ENCODE measurements at regions of chr2 and their contacts with region 1.

Region 1: GRCh38 chr2:173027181-173028128 is 48.2 kb upstream of the MAP3K20 start:
- DNase-seq: peak; percentile 83
- ATAC-seq: peak; percentile 91
- H3K4me3 ChIP-seq: no peak overlapping the region
- H3K27ac ChIP-seq: no peak overlapping the region
- H3K4me1 ChIP-seq: peaks cover 0 to 4% of the 10 kb centered on the region in 2 experiments; a peak in 2 of 4 replicates
- H3K27me3 ChIP-seq: no peaks in the 10 kb centered on the region
- CTCF ChIP-seq: peak; percentile 91 to 98 (median 94)
- POLR2A ChIP-seq: no peak
- RAD21 ChIP-seq: peak; percentile 97

Region 2: GRCh38 chr2:172545408-172546084 is 481.9 kb before region 1 on chr2:
- CTCF ChIA-PET with region 1: no interaction called
- POLR2A ChIA-PET with region 1: no interaction called
- RAD21 ChIA-PET with region 1: no interaction called
- intact Hi-C with region 1: no loop called
- DNase-seq: no peak
- ATAC-seq: no peak
- H3K4me3 ChIP-seq: no peak overlapping the region
- H3K27ac ChIP-seq: no peak overlapping the region
- H3K4me1 ChIP-seq: no peaks in the 10 kb centered on the region
- H3K27me3 ChIP-seq: no peaks in the 10 kb centered on the region
- CTCF ChIP-seq: no peak
- POLR2A ChIP-seq: no peak
- RAD21 ChIP-seq: no peak

Region 3: DNA sequence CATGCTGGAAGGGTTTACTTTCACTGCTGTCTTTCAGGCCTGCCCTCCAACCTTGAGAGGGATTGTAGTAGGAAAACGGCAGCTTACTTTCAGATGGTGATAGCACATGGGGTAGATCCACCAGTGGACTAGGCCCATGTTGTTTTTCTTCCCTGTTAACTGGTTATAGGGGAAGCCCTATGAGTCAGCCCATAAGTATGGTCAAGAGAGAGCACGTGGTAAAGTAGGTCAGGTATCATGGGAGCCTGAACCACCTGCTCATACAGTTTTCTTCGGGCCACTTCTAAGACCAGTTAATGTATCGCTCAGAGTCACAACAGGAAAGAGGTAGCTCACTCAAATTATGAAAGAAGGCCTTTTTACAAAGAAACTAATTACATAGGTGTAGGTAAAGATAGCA is 438.5 kb before region 1 on chr2:
- CTCF ChIA-PET with region 1: no interaction called
- POLR2A ChIA-PET with region 1: no interaction called
- RAD21 ChIA-PET with region 1: no interaction called
- intact Hi-C with region 1: no loop called
- DNase-seq: no peak
- ATAC-seq: no peak
- H3K4me3 ChIP-seq: no peak overlapping the region
- H3K27ac ChIP-seq: no peak overlapping the region
- H3K4me1 ChIP-seq: no peaks in the 10 kb centered on the region; a peak in 1 of 4 replicates
- H3K27me3 ChIP-seq: no peaks in the 10 kb centered on the region
- CTCF ChIP-seq: no peak
- POLR2A ChIP-seq: no peak
- RAD21 ChIP-seq: no peak

Region 4: DNA sequence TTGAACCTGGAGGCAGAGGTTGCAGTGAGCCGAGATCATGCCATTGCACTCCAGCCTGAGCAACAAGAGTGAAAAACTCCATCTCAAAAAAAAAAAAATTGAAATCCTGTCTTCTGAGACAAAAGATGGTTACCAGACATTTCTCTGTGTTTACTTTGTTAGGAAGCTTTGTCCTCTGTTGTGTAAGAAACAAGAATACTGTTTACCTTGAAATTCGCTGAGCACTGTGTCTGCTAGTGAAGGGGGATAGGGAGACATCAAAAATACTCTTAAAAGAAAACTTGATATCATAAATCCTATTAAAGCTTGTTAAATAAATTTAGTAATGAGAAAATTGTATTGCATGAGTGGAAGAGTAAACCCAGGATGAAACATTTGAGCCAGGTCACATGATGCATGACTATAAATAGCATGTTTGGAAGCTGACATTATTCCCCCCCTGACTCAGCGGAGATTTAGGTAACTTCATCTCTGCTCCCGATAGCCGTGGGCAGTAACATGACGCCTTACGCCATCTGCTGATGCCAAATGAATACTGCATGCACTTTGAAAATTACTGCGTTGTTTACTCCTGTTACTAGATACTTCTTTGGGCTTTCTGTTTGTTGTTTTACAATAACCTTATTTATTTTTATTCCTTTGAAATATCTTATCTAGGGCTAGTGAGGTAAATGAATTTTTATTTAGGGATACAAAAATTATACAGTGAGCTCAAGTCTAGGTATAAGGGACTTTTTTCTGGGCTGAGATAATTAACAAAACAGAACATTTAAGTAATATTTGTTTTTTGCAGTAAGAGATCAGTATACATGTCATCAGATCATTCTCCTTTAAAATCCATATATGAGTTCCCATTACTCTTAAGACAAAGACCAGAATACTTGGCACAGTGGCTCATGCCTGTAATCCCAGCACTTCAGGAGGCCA is 183.1 kb after region 1 on chr2:
- CTCF ChIA-PET with region 1: interaction called, 108 read pairs
- POLR2A ChIA-PET with region 1: no interaction called
- RAD21 ChIA-PET with region 1: interaction called, 9 to 10 read pairs
- intact Hi-C with region 1: loop called (anchors 1 kb)
- DNase-seq: peak; percentile 65
- ATAC-seq: peak; percentile 95
- H3K4me3 ChIP-seq: no peak overlapping the region
- H3K27ac ChIP-seq: no peak overlapping the region
- H3K4me1 ChIP-seq: peaks cover 0 to 5% of the 10 kb centered on the region in 2 experiments; a peak in 2 of 4 replicates
- H3K27me3 ChIP-seq: no peaks in the 10 kb centered on the region
- CTCF ChIP-seq: peak; percentile 76 to 91 (median 86)
- POLR2A ChIP-seq: no peak
- RAD21 ChIP-seq: peak; percentile 97

Region 5: DNA sequence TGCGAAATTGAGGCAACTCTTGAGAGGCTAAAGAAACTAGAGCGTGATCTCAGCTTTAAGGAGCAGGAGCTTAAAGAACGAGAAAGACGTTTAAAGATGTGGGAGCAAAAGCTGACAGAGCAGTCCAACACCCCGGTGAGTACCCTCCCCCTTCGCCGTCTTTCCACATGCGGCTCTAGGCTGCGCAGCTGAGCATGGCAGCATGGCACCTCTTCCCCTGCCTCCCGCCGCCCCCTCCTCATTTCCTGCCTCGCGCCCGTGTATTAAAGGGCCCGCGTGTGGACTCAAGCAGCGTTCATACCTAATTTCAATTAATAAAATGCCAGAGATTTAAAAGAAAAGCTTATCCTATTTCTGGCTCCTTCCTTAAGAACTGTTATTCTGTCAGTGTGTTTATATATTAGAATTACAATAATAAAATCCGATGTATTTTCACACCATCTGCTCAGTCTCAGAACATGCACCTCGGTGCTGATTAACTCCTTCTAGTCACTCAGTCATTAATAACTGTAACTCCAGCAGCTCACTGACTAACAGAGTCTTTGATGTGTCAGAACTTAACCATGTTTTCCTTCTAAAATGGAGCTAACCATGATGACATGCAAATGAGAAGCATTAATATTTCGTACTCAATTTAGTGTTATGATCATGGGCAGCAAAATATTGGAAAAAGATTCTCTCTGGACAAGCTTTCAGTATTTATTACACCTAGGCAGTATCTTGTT is 189.8 kb after region 1 on chr2:
- CTCF ChIA-PET with region 1: interaction called, 108 read pairs
- POLR2A ChIA-PET with region 1: no interaction called
- RAD21 ChIA-PET with region 1: no interaction called
- intact Hi-C with region 1: no loop called
- DNase-seq: no peak
- ATAC-seq: no peak
- H3K4me3 ChIP-seq: no peak overlapping the region
- H3K27ac ChIP-seq: no peak overlapping the region
- H3K4me1 ChIP-seq: no peaks in the 10 kb centered on the region
- H3K27me3 ChIP-seq: no peaks in the 10 kb centered on the region
- CTCF ChIP-seq: no peak
- POLR2A ChIP-seq: no peak
- RAD21 ChIP-seq: no peak

Region 6: GRCh38 chr2:173354601-173355131 is 327.2 kb after region 1 on chr2 and contains the start of gene CDCA7:
- CTCF ChIA-PET with region 1: no interaction called
- POLR2A ChIA-PET with region 1: no interaction called
- RAD21 ChIA-PET with region 1: no interaction called
- intact Hi-C with region 1: loop called (anchors 10 kb)
- DNase-seq: peak; percentile 54
- ATAC-seq: peak; percentile 75
- H3K4me3 ChIP-seq: peak within 1 kb of the TSS; percentile 85 to 89
- H3K27ac ChIP-seq: peak within 1 kb of the TSS; percentile 83
- H3K4me1 ChIP-seq: peaks cover 4 to 16% of the 10 kb centered on the region in 2 experiments; a peak in 3 of 4 replicates
- H3K27me3 ChIP-seq: no peaks in the 10 kb centered on the region
- CTCF ChIP-seq: no peak
- POLR2A ChIP-seq: peak; percentile 35
- RAD21 ChIP-seq: no peak
- total RNA-seq, gene CDCA7: 57.9 TPM

Region 7: GRCh38 chr2:173448938-173449471 is 421.6 kb after region 1 on chr2:
- CTCF ChIA-PET with region 1: interaction called, 6 read pairs
- POLR2A ChIA-PET with region 1: no interaction called
- RAD21 ChIA-PET with region 1: no interaction called
- intact Hi-C with region 1: loop called (anchors 5 kb)
- DNase-seq: peak; percentile 85
- ATAC-seq: peak; percentile 94
- H3K4me3 ChIP-seq: peak overlapping the region; percentile 39 to 58
- H3K27ac ChIP-seq: peak overlapping the region; percentile 53
- H3K4me1 ChIP-seq: peaks cover 2 to 6% of the 10 kb centered on the region in 2 experiments; a peak in 2 of 4 replicates
- H3K27me3 ChIP-seq: no peaks in the 10 kb centered on the region
- CTCF ChIP-seq: peak; percentile 70 to 93 (median 87)
- POLR2A ChIP-seq: peak; percentile 65
- RAD21 ChIP-seq: peak; percentile 80

Measured in HCT116 (cell line).